Heart left ventricle (tissue), 16 donors: ENCODE measurements at regions of chr18 and their contacts with region 1.

Region 1: DNA sequence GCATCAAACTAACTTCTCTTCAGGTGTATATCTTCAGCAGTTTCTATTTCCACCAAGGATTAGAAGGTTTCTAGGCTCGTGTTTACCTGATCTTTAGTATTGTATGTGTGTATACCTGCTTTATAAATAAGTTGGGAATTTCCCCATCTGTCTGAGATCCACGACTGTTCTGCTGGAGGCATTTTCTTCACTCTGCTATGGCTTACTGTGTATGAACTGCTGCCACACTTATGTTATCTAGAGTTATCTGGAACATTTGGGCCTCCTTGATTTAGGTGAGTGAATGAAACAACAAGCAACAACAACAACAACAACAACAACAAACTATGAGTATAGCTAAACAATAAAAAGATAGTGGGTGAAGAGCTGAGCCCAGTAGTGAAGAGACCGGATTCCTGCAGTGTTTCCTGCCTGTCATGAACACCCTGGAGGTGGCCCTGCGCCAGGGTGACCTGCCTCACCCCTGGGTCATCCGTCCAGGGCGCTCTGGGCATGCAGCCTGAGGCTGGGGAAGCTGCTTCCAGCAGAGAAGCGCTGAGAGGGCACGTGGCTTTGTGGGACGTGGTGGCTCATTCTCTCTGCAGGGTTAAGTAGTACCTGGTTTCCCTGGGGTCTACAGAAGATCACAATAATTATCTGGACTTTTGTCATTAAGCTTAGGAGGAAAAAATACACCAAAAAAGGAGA is 56.1 kb upstream of the GATA6 start:
- DNase-seq: peak; percentile 70 to 90 (median 77)
- ATAC-seq: peak; percentile 85 to 95 (median 88)
- H3K4me3 ChIP-seq: no peak overlapping the region
- H3K27ac ChIP-seq: peak overlapping the region in 2 of 12 donors; percentile 43 to 65
- H3K4me1 ChIP-seq: peaks cover 0 to 22% (median 11%) of the 10 kb centered on the region in 12 donors
- H3K27me3 ChIP-seq: no peaks in the 10 kb centered on the region
- CTCF ChIP-seq: no peak
- POLR2A ChIP-seq: no peak

Region 2: GRCh38 chr18:22005191-22005841 is 108.0 kb before region 1 on chr18:
- intact Hi-C with region 1: no loop called
- DNase-seq: peak in 1 of 5 donors; percentile 49
- ATAC-seq: no peak
- H3K4me3 ChIP-seq: no peak overlapping the region
- H3K27ac ChIP-seq: peak overlapping the region in 1 of 12 donors; percentile 5
- H3K4me1 ChIP-seq: peaks cover 0 to 11% (median under 1%) of the 10 kb centered on the region in 12 donors
- H3K27me3 ChIP-seq: no peaks in the 10 kb centered on the region
- CTCF ChIP-seq: no peak
- POLR2A ChIP-seq: no peak

Region 3: GRCh38 chr18:22057908-22058527 is 55.3 kb before region 1 on chr18:
- intact Hi-C with region 1: no loop called
- DNase-seq: no peak
- ATAC-seq: no peak
- H3K4me3 ChIP-seq: no peak overlapping the region
- H3K27ac ChIP-seq: no peak overlapping the region
- H3K4me1 ChIP-seq: no peaks in the 10 kb centered on the region
- H3K27me3 ChIP-seq: no peaks in the 10 kb centered on the region
- CTCF ChIP-seq: no peak
- POLR2A ChIP-seq: no peak

Region 4: DNA sequence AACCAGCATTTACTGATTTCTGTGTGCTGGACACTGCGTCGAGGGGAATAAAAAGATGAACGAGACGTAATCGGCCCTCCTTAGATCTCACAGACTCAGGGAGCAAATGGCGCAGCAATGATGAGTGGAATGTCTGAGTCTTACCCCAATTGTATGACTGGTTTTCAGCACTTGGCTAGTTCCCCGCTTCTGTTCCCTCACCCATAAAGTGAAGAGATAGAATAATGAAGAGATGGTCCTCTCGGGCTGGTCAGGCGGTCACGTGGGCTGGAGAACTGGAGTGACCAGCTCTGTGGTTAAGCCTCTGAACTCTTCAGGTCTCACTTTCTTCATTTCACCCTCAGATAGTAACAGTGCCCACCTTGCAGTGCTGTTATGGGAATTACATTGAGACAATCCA is 38.8 kb after region 1 on chr18:
- intact Hi-C with region 1: loop called in 1 of 10 experiments (anchors 5 kb)
- DNase-seq: no peak
- ATAC-seq: peak in 1 of 4 donors; percentile 31
- H3K4me3 ChIP-seq: no peak overlapping the region
- H3K27ac ChIP-seq: no peak overlapping the region
- H3K4me1 ChIP-seq: no peaks in the 10 kb centered on the region
- H3K27me3 ChIP-seq: peaks cover 0 to 6% (median 0%) of the 10 kb centered on the region in 9 donors
- CTCF ChIP-seq: no peak
- POLR2A ChIP-seq: no peak

Region 5: DNA sequence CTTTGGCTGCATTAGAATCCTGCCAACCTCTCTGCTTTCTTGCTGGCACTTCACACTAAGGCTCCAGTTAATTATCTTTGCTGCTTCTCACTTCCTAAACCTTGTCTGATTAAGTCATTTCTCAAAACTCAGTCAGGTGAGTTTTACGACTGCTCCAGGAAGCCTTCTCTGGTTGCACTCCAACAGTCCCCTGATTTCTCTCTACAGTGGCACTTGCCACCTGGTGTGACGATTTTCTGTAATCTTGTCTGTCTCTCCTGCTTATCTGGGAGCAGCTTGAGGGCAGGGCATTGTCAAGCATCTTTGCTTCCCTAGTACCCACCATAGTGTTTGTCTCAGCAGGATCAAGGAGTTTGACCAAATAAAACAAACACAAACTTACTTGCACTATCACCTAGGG is 45.7 kb after region 1 on chr18:
- intact Hi-C with region 1: loop called in 3 of 10 experiments (anchors 2 to 10 kb)
- DNase-seq: no peak
- ATAC-seq: no peak
- H3K4me3 ChIP-seq: no peak overlapping the region
- H3K27ac ChIP-seq: no peak overlapping the region
- H3K4me1 ChIP-seq: peaks cover 0 to 20% (median 3%) of the 10 kb centered on the region in 12 donors
- H3K27me3 ChIP-seq: peaks cover 0 to 18% (median 0%) of the 10 kb centered on the region in 9 donors
- CTCF ChIP-seq: no peak
- POLR2A ChIP-seq: no peak